Breast epithelium (tissue), 4 donors: ENCODE measurements at regions of chr20 and their contacts with region 1.

Region 1: GRCh38 chr20:62473717-62474603 is 1.8 kb downstream of the GATA5 start:
- DNase-seq: no peak
- H3K4me3 ChIP-seq: no peak overlapping the region
- H3K27ac ChIP-seq: no peak overlapping the region
- H3K4me1 ChIP-seq: peaks cover 7 to 10% of the 10 kb centered on the region in 2 donors
- H3K27me3 ChIP-seq: peaks cover 10 to 86% of the 10 kb centered on the region in 2 donors
- CTCF ChIP-seq: no peak
- POLR2A ChIP-seq: no peak

Region 2: DNA sequence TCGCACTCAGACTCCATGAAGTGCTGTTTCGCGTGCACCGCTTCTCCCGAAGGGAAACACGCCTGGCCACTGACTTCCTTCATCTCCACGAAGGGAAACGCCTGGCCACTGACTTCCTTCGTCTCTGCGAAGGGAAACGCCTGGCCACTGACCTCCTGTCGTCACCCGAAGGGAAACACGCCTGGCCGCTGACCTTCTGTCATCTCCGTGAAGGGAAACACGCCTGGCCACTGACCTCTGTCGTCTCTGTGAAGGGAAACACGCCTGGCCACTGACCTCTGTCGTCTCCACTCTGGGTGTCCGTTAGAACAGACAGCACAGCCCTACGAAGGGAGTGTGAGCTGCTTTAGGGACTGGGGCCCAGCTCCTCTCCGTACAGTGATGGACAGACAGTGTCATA is 188.2 kb before region 1 on chr20:
- intact Hi-C with region 1: loop called (anchors 5 kb)
- DNase-seq: peak in 1 of 2 donors; percentile 65
- H3K4me3 ChIP-seq: no peak overlapping the region
- H3K27ac ChIP-seq: peak overlapping the region; percentile 5 to 52
- H3K4me1 ChIP-seq: no peaks in the 10 kb centered on the region
- H3K27me3 ChIP-seq: no peaks in the 10 kb centered on the region
- CTCF ChIP-seq: no peak
- POLR2A ChIP-seq: no peak

Region 3: DNA sequence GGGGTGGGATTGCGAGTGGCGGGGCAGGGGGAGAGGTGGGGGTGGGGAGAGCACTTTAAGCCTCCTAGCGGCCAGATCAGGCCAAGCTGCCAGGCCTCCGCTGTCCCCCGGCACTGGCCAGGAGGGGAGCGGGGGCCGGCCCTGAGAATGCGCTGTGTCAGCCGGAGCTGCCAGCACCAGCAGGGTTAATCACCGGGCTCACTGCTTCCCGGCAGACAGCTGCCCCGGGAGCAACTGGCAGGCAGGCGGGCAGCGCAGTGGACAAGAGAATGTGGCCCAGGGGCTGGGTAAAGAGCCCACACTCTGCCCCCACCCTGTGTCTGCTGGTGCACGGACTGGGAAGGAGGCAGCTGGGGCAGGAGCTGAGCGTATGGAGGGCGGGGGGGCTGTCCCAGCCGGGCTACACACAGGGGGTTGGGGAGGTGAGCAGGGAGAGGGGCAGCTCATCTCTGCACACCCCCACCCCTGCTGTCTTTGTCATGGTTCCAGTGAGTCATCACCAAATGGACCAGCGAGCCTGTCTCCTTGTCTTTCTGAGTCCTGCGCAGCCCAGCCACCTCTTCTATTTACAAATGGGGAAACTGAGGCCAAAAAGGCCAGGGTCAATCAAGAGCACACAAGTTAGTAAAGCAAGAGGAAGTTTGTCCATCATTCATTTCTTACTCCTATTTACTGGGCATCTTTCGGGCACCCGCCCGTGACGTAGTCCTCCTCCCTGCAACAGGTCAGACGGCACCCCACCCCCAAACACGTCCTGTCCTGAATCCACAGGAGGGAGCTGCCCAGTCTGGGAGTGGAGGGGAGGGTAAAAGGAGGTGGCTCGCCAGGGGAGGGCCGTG is 104.8 kb before region 1 on chr20:
- intact Hi-C with region 1: no loop called
- DNase-seq: no peak
- H3K4me3 ChIP-seq: peak overlapping the region in 2 of 3 donors; percentile 83 to 86
- H3K27ac ChIP-seq: peak overlapping the region; percentile 55 to 91
- H3K4me1 ChIP-seq: peaks cover 35 to 43% of the 10 kb centered on the region in 2 donors
- H3K27me3 ChIP-seq: no peaks in the 10 kb centered on the region
- CTCF ChIP-seq: no peak
- POLR2A ChIP-seq: no peak